ENCODE measurements at regions of chr4 and their contacts with region 1.

Region 1: GRCh38 chr4:153083447-153083947 is 120.7 kb upstream of the TRIM2 start:
- DNase-seq: peak; percentile 78
- ATAC-seq: peak; percentile 92
- H3K4me3 ChIP-seq: no peak overlapping the region
- H3K27ac ChIP-seq: no peak overlapping the region
- H3K4me1 ChIP-seq: 0 out of 2 replicates have a peak, but pooled peaks cover 1% of the 10 kb centered on the region
- H3K27me3 ChIP-seq: peaks cover 20% of the 10 kb centered on the region
- CTCF ChIP-seq: peak; percentile 74
- POLR2A ChIP-seq: no peak
- RAD21 ChIP-seq: peak; percentile 70

Region 2: DNA sequence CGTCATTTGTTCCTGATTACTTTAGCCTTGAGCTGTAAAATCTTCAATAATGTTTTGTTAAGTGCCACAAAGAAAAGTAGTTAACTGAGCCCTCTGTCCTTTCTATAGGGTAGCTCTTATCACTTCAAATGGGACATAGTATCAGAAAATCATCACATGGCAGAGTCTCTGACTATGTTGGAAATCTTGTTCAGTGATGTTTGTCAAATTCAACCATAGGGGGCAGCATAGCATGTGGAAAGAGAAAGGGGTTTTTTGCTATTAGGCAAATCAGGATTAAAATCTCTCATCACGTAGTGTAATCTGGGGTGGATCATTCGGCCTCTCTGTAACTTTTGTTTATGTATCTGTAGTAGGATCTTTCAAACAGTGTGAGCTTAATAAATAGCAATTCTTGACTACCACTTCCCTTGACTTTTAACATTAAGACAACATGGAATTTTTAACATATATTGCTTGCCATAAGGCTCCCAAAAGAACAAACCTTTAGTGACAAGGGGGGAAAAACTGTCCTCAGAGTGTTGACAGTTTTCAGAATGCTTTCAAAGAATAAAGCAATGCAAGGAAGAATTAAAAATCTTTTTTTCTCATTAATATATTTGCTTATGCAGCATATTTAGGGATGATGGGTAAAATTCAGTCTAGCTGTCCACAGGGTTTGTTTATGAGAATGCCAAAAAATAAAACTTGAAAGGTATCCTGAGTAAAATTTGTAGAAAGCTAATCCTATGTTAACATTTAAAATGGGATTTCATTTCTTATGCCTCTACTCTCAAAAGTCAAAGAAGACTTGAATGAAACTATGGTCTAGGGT is 674.8 kb before region 1 on chr4:
- CTCF ChIA-PET with region 1: no interaction called
- POLR2A ChIA-PET with region 1: no interaction called
- dilution Hi-C with region 1: no loop called
- in situ Hi-C with region 1: no loop called
- intact Hi-C with region 1: loop called (anchors 10 kb)
- DNase-seq: peak; percentile 50
- ATAC-seq: peak; percentile 79
- H3K4me3 ChIP-seq: no peak overlapping the region
- H3K27ac ChIP-seq: no peak overlapping the region
- H3K4me1 ChIP-seq: no peaks in the 10 kb centered on the region
- H3K27me3 ChIP-seq: no peaks in the 10 kb centered on the region
- CTCF ChIP-seq: peak; percentile 76
- POLR2A ChIP-seq: no peak
- RAD21 ChIP-seq: peak; percentile 71

Region 3: GRCh38 chr4:152696764-152697261 is 386.7 kb before region 1 on chr4:
- CTCF ChIA-PET with region 1: no interaction called
- POLR2A ChIA-PET with region 1: no interaction called
- dilution Hi-C with region 1: no loop called
- in situ Hi-C with region 1: no loop called
- intact Hi-C with region 1: no loop called
- DNase-seq: peak; percentile 65
- ATAC-seq: peak; percentile 74
- H3K4me3 ChIP-seq: no peak overlapping the region
- H3K27ac ChIP-seq: no peak overlapping the region
- H3K4me1 ChIP-seq: no peaks in the 10 kb centered on the region
- H3K27me3 ChIP-seq: peaks cover 25% of the 10 kb centered on the region
- CTCF ChIP-seq: no peak
- POLR2A ChIP-seq: no peak
- RAD21 ChIP-seq: no peak

Region 4: DNA sequence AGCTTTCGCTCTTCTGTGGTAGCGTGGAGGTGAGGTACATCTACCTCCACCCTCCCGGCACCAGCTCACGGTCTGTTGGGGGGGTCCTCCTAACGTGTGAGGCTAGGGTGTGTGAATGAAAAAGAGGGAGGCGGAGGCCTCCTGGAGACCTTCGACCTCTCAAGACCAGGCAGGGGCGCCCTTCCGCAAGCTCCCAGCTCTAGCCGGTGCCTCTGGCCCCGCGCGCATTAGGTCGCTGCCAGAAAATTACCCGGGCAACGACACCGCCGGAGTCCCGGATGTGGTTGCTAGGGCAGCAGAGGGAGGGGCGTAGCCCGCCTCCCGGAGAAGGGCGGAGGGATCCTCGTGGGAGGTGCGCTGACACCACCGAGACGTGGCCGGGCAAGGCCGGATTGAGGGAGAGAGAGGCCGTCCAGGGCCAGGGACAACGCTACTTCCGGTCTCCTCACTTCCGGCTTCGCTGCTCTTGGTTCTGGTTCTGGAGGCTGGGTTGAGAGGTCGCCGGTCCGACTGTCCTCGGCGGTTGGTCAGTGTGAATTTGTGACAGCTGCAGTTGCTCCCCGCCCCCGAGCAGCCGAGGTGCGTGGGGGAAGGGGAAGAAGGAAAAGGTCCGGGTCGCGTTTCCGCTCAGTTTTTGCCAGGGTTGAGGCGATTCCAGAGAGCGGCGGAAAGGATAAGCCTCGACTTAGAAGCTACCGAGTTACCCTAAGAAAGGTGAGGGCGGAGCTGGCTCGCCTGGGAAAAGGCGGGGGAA is 303.8 kb before region 1 on chr4 and contains the starts of genes ARFIP1 and TIGD4:
- CTCF ChIA-PET with region 1: interaction called, 5 read pairs
- POLR2A ChIA-PET with region 1: interaction called, 4 read pairs
- dilution Hi-C with region 1: no loop called
- in situ Hi-C with region 1: no loop called
- intact Hi-C with region 1: loop called (anchors 5 kb)
- DNase-seq: peak; percentile 96
- ATAC-seq: peak; percentile 98
- H3K4me3 ChIP-seq: peak within 1 kb of the TSS; percentile 79
- H3K27ac ChIP-seq: peak within 1 kb of the TSS; percentile 70
- H3K4me1 ChIP-seq: no peaks in the 10 kb centered on the region
- H3K27me3 ChIP-seq: peaks cover 6% of the 10 kb centered on the region; the same call in 1 of the 2 replicates
- CTCF ChIP-seq: peak; percentile 12; the same call in 1 of the 2 replicates
- POLR2A ChIP-seq: peak; percentile 77
- RAD21 ChIP-seq: peak; percentile 21; the same call in 1 of the 2 replicates
- total RNA-seq, gene ARFIP1: 30.5 and 37.5 TPM in 2 replicates
- total RNA-seq, gene TIGD4: not detected in 2 replicates

Region 5: DNA sequence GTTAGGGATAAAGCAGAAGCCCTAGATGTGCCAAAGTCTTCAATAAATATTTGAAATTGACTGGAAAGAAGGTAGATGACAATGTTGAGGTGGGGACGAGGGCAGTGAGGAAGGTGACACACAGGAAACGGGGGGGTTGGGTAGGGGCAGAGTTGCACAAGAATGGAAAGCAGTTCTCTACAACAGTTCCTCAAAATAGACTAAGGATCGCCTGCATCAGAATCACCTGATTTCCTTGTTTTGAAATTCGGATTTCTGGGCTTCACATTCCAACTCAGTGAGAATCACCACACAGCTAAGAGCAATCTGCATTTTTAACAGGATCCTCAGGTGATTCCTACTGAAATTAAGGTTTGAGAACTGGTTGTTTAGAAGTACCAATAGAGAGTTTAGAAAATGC is 233.1 kb before region 1 on chr4:
- CTCF ChIA-PET with region 1: interaction called, 10 read pairs
- POLR2A ChIA-PET with region 1: no interaction called
- dilution Hi-C with region 1: no loop called
- in situ Hi-C with region 1: loop called (anchors 5 kb)
- intact Hi-C with region 1: loop called (anchors 1 kb)
- DNase-seq: peak; percentile 54
- ATAC-seq: no peak
- H3K4me3 ChIP-seq: no peak overlapping the region
- H3K27ac ChIP-seq: no peak overlapping the region
- H3K4me1 ChIP-seq: peaks cover 2% of the 10 kb centered on the region
- H3K27me3 ChIP-seq: no peaks in the 10 kb centered on the region
- CTCF ChIP-seq: no peak
- POLR2A ChIP-seq: no peak
- RAD21 ChIP-seq: no peak

Region 6: DNA sequence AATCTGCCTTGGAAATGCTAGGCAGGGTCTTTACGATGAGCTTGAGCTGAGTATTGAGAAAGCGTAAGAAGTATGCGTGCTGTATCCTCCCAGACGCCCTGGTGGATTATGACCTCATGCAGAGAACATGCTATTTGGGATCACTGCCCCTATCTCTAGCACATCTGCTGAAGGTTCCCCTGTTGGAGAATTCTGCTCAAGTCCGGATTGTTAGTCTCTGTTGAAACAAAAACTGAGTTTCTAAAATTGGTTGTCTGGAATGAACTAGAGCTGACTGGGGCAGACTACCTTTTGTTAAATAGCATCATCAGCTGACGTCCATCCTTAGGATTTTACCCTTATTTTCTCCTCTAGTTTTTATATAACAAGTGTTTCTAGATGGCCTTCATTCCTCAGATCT is 139.8 kb before region 1 on chr4:
- CTCF ChIA-PET with region 1: no interaction called
- POLR2A ChIA-PET with region 1: no interaction called
- dilution Hi-C with region 1: no loop called
- in situ Hi-C with region 1: no loop called
- intact Hi-C with region 1: loop called (anchors 5 kb)
- DNase-seq: peak; percentile 44
- ATAC-seq: no peak; the same call in 1 of the 2 replicates
- H3K4me3 ChIP-seq: no peak overlapping the region
- H3K27ac ChIP-seq: no peak overlapping the region
- H3K4me1 ChIP-seq: no peaks in the 10 kb centered on the region
- H3K27me3 ChIP-seq: peaks cover 24% of the 10 kb centered on the region
- CTCF ChIP-seq: no peak
- POLR2A ChIP-seq: no peak
- RAD21 ChIP-seq: no peak

Region 7: DNA sequence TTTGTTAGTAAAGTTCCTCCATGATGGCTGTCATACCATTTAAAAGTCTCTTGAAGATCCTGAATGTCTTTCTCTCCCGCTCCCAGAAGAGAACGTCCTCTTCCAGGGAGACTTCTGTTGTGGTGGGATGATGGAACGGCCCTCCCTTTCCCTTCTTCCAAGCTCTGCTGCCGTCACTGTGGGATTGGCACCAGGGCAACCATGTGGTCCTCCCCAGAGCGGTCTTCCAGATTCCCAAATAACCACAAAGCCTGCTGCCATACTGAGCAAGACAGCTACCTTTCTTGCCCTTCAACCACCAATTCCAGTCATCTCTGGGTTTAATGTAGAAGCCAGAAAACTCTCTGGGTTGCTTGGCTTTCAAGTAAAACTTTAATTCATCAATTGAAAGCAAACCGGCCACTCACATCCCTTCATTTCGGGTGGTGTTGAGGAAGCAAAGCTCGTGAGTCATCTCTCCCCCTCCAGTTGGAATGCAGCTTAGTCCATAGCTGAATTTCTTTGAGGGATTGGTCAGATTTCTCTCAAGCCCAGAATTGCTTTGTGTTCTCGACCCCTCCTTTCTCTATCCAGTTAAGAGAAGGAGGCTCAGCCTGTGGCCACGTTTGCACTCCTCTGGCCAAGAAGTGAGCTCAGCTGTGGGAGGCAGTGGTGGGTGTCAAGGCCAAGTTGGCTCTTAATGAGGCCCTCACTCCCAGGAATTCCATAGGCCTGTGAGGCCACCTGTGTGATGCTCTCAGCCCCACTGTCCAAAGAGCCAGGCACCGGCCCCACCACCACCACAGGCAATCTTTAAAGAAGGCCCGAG is 110.5 kb before region 1 on chr4:
- CTCF ChIA-PET with region 1: no interaction called
- POLR2A ChIA-PET with region 1: no interaction called
- dilution Hi-C with region 1: no loop called
- in situ Hi-C with region 1: no loop called
- intact Hi-C with region 1: no loop called
- DNase-seq: peak; percentile 92
- ATAC-seq: peak; percentile 93
- H3K4me3 ChIP-seq: no peak overlapping the region
- H3K27ac ChIP-seq: peak overlapping the region; percentile 31; the same call in 1 of the 2 replicates
- H3K4me1 ChIP-seq: peaks cover 5% of the 10 kb centered on the region
- H3K27me3 ChIP-seq: peaks cover 2% of the 10 kb centered on the region
- CTCF ChIP-seq: no peak
- POLR2A ChIP-seq: no peak
- RAD21 ChIP-seq: no peak

Region 8: DNA sequence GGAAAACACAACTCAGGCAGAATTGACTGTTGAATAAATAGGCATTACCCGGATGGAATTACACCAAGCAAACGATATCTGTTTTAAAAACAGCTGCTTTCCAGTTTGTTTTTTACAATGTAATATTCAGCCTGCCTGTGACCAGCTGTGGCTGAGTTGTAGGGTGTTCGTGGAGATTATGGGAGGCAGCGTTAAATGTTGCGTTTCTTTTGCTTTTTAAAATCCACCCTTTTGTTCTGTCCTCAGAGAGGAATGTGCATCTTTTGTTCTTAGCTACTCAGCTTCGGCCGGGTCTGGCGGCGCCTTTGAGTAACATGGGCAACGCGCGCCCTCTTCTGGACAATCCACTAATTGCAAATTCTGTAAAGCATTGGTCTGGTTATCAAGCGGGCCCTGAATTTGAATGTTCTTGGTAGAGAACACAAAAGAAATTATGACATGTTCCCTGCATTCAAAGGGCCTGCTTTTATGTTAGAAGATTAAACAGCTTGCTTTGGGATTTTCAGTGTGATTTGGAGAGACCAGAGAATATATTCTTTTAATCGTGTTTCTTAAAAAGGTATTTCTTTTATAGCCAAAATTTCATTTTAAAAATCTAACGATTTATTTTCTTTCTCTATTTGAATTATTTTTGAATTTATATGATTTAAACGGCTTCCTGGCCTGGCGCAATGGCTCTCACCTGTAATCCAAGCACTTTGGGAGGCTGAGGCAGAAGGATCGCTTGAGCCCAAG is 44.4 kb after region 1 on chr4:
- CTCF ChIA-PET with region 1: interaction called, 33 read pairs
- POLR2A ChIA-PET with region 1: no interaction called
- dilution Hi-C with region 1: no loop called
- in situ Hi-C with region 1: loop called (anchors 5 kb)
- intact Hi-C with region 1: loop called (anchors 1 kb)
- DNase-seq: peak; percentile 77
- ATAC-seq: peak; percentile 95
- H3K4me3 ChIP-seq: no peak overlapping the region
- H3K27ac ChIP-seq: no peak overlapping the region
- H3K4me1 ChIP-seq: no peaks in the 10 kb centered on the region
- H3K27me3 ChIP-seq: no peaks in the 10 kb centered on the region
- CTCF ChIP-seq: peak; percentile 94
- POLR2A ChIP-seq: no peak
- RAD21 ChIP-seq: peak; percentile 91

Region 9: DNA sequence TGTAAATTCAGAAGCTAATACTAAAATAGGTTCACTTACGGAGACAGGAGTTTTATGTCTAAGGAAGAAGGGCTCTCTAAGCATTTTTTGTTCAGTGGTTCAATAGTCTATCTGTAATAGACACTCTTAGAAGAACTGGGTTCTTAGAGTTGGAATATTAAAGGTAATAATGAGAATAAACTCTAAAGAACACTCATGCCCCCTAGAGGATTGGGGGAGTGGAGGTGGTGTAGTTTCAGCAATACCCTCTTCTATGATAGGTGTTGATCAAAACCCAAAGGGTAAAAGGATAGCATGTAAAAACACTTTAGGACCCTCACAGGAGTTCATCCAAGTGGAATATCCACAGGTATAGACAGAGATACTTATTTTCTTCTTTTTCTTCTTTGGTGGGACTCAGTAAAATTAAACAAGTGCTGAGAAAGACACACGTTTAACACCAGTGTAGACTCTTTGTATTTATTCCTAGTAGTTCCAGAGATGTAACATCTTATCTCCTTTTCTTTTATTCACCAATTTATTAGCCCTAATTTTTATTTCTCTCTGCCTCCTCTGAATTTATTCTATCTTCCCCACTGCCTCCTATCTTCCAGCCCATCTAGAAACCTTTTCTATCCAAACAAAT is 235.3 kb after region 1 on chr4:
- CTCF ChIA-PET with region 1: no interaction called
- POLR2A ChIA-PET with region 1: no interaction called
- dilution Hi-C with region 1: no loop called
- in situ Hi-C with region 1: no loop called
- intact Hi-C with region 1: loop called (anchors 5 kb)
- DNase-seq: peak; percentile 54
- ATAC-seq: peak; percentile 90
- H3K4me3 ChIP-seq: no peak overlapping the region
- H3K27ac ChIP-seq: no peak overlapping the region
- H3K4me1 ChIP-seq: no peaks in the 10 kb centered on the region
- H3K27me3 ChIP-seq: no peaks in the 10 kb centered on the region
- CTCF ChIP-seq: peak; percentile 80
- POLR2A ChIP-seq: no peak
- RAD21 ChIP-seq: peak; percentile 84

Measured in IMR-90 (cell line).